ENCODE measurements at regions of chr2 and their contacts with region 1.

Region 1: GRCh38 chr2:190408538-190409271 is 550 bp downstream of the MFSD6 start:
- DNase-seq: peak; percentile 82
- ATAC-seq: peak; percentile 50
- H3K4me3 Mint-ChIP-seq: peak overlapping the region; percentile 81
- H3K27ac Mint-ChIP-seq: peak overlapping the region; percentile 90
- H3K4me1 Mint-ChIP-seq: peaks cover 45% of the 10 kb centered on the region
- H3K27me3 Mint-ChIP-seq: no peaks in the 10 kb centered on the region

Region 2: GRCh38 chr2:189783927-189784867 is 624.5 kb before region 1 on chr2 and contains the starts of genes ORMDL1 and PMS1:
- CTCF ChIA-PET with region 1: no interaction called
- POLR2A ChIA-PET with region 1: no interaction called
- intact Hi-C with region 1: loop called in 1 of 2 experiments (anchors 1 kb)
- DNase-seq: peak; percentile 96
- ATAC-seq: peak; percentile 92
- H3K4me3 Mint-ChIP-seq: peak within 1 kb of the TSS; percentile 74
- H3K27ac Mint-ChIP-seq: peak within 1 kb of the TSS; percentile 94
- H3K4me1 Mint-ChIP-seq: peaks cover 52% of the 10 kb centered on the region
- H3K27me3 Mint-ChIP-seq: no peaks in the 10 kb centered on the region
- total RNA-seq, gene ORMDL1: 45.2 to 49.2 TPM
- total RNA-seq, gene PMS1: 45.8 to 47.4 TPM

Region 3: DNA sequence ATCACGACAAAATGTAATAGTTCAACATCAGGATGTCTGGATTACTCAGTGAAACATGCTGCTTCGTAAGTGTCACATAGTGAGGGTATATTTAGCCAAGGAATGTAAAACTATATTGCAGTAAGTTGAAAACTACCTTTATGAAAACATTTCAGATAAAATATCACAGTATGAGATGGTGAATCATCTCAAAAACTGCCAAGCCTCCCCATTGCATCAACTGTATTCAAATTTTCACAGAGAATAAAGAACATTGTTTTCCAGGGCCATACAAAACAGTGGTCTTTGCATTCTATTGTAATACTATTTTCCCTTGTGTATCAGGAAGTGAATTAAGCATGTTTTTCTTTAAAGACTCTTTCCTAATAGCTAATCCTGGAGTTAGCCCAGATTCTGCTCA is 298.6 kb before region 1 on chr2:
- CTCF ChIA-PET with region 1: no interaction called
- POLR2A ChIA-PET with region 1: no interaction called
- intact Hi-C with region 1: no loop called
- DNase-seq: no peak
- ATAC-seq: no peak
- H3K4me3 Mint-ChIP-seq: no peak overlapping the region
- H3K27ac Mint-ChIP-seq: no peak overlapping the region
- H3K4me1 Mint-ChIP-seq: no peaks in the 10 kb centered on the region
- H3K27me3 Mint-ChIP-seq: peaks cover 2% of the 10 kb centered on the region

Region 4: GRCh38 chr2:190534310-190535120 is 125.8 kb after region 1 on chr2 and contains the start of gene NEMP2:
- CTCF ChIA-PET with region 1: no interaction called
- POLR2A ChIA-PET with region 1: interaction called, 3 read pairs
- intact Hi-C with region 1: loop called (anchors 1 kb)
- DNase-seq: peak; percentile 87
- ATAC-seq: peak; percentile 70
- H3K4me3 Mint-ChIP-seq: peak within 1 kb of the TSS; percentile 95
- H3K27ac Mint-ChIP-seq: peak within 1 kb of the TSS; percentile 98
- H3K4me1 Mint-ChIP-seq: peaks cover 52% of the 10 kb centered on the region
- H3K27me3 Mint-ChIP-seq: no peaks in the 10 kb centered on the region
- total RNA-seq, gene NEMP2: 24.6 to 25.1 TPM

Region 5: DNA sequence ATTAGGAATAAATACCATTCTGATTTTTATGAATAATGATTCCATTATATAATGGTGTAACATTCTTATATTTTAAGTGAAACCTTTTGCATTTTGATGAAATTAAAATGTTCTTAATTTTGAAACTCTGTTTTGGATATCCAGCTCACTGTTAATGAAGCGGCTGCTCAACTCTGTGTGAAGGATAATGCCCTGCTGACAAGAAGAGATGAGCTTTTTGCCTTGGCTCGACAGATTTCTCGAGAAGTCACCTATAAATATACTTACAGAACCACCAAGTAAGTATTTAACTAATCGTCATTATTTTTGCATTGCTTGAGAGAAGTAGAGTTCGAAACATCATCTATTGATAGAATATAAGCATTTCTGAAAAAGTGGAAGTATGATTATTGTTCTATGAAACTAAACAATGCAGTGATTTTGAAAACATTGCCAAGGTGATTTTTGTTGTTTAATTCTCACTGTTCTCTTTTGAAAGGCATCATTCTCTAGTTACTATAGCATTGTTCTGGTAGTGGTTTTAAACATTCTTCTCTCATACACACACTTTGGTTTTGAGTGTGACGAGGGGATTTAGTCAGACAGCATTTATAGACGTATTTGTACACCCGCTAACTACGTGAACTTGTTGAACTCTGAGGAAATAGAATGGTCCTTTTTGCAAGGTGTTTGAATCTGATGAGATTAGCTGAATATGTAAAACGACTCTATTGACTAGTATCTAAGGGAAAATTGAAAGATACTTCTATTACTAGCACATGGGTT is 261.7 kb after region 1 on chr2:
- CTCF ChIA-PET with region 1: no interaction called
- POLR2A ChIA-PET with region 1: no interaction called
- intact Hi-C with region 1: no loop called
- DNase-seq: no peak
- ATAC-seq: peak; percentile 53
- H3K4me3 Mint-ChIP-seq: no peak overlapping the region
- H3K27ac Mint-ChIP-seq: no peak overlapping the region
- H3K4me1 Mint-ChIP-seq: peaks cover 55% of the 10 kb centered on the region
- H3K27me3 Mint-ChIP-seq: no peaks in the 10 kb centered on the region

Region 6: GRCh38 chr2:191013932-191014652 is 605.4 kb after region 1 on chr2 and contains the start of gene STAT1:
- CTCF ChIA-PET with region 1: no interaction called
- POLR2A ChIA-PET with region 1: no interaction called
- intact Hi-C with region 1: loop called in 1 of 2 experiments (anchors 10 kb)
- DNase-seq: peak; percentile 98
- ATAC-seq: peak; percentile 79
- H3K4me3 Mint-ChIP-seq: no peak within 1 kb of the TSS
- H3K27ac Mint-ChIP-seq: no peak within 1 kb of the TSS
- H3K4me1 Mint-ChIP-seq: peaks cover 41% of the 10 kb centered on the region
- H3K27me3 Mint-ChIP-seq: no peaks in the 10 kb centered on the region
- total RNA-seq, gene STAT1: 317 to 343 TPM

Region 7: DNA sequence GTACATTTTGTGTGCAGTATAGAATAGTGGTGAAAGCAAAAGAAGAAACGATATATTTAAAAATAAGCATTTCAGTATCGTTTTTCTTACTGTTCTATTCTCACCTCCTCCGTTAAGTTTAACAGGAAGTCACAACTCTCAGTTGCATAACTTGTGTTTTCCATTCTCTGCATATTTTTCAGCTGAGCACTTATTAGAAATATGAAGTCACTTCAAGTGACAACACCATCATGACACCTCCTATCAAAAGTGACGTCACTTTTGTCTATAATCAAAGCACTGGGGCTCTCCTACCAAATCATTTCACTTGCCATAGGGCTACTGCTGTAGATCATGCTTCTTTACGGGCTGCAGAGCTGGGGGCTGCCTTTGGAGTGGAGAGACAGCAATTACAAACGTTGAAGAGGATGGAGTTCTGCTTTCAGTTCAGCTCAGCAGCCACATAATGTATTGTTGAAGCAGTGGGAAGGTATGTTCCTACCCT is 705.7 kb after region 1 on chr2:
- CTCF ChIA-PET with region 1: no interaction called
- POLR2A ChIA-PET with region 1: no interaction called
- intact Hi-C with region 1: loop called in 1 of 2 experiments (anchors 2 kb)
- DNase-seq: peak; percentile 49
- ATAC-seq: peak; percentile 22
- H3K4me3 Mint-ChIP-seq: peak overlapping the region; percentile 30
- H3K27ac Mint-ChIP-seq: peak overlapping the region; percentile 82
- H3K4me1 Mint-ChIP-seq: peaks cover 62% of the 10 kb centered on the region
- H3K27me3 Mint-ChIP-seq: no peaks in the 10 kb centered on the region

Measured in activated CD4-positive, alpha-beta T cell treated with anti-CD3 and anti-CD28 coated beads for 36 hours (primary cell).